HepG2 (cell line): ENCODE measurements at regions of chr7 and their contacts with region 1.

Region 1: GRCh38 chr7:117673839-117674238 is 194.0 kb downstream of the CFTR start:
- DNase-seq: peak; percentile 7
- ATAC-seq: peak; percentile 66; the same call in 1 of the 3 replicates
- H3K4me3 ChIP-seq: no peak overlapping the region
- H3K27ac ChIP-seq: no peak overlapping the region
- H3K4me1 ChIP-seq: no peaks in the 10 kb centered on the region
- H3K27me3 ChIP-seq: peaks cover 0 to 6% of the 10 kb centered on the region in 2 experiments; a peak in 1 of 5 replicates
- CTCF ChIP-seq: peak; percentile 21; the same call in 1 of the 2 replicates
- EP300 ChIP-seq: no peak
- POLR2A ChIP-seq: no peak
- RAD21 ChIP-seq: no peak

Region 2: GRCh38 chr7:117458977-117459583 is 214.8 kb before region 1 on chr7:
- CTCF ChIA-PET with region 1: no interaction called
- POLR2A ChIA-PET with region 1: no interaction called
- in situ Hi-C with region 1: no loop called
- intact Hi-C with region 1: loop called (anchors 1 kb)
- DNase-seq: peak; percentile 18
- ATAC-seq: no peak
- H3K4me3 ChIP-seq: no peak overlapping the region
- H3K27ac ChIP-seq: no peak overlapping the region
- H3K4me1 ChIP-seq: no peaks in the 10 kb centered on the region
- H3K27me3 ChIP-seq: no peaks in the 10 kb centered on the region
- CTCF ChIP-seq: peak; percentile 35
- EP300 ChIP-seq: no peak
- POLR2A ChIP-seq: no peak
- RAD21 ChIP-seq: no peak

Region 3: GRCh38 chr7:117470777-117471176 is 203.1 kb before region 1 on chr7:
- CTCF ChIA-PET with region 1: no interaction called
- POLR2A ChIA-PET with region 1: no interaction called
- in situ Hi-C with region 1: no loop called
- intact Hi-C with region 1: no loop called
- DNase-seq: no peak
- ATAC-seq: no peak
- H3K4me3 ChIP-seq: no peak overlapping the region
- H3K27ac ChIP-seq: no peak overlapping the region
- H3K4me1 ChIP-seq: no peaks in the 10 kb centered on the region
- H3K27me3 ChIP-seq: no peaks in the 10 kb centered on the region
- CTCF ChIP-seq: no peak
- EP300 ChIP-seq: no peak
- POLR2A ChIP-seq: no peak
- RAD21 ChIP-seq: no peak

Region 4: GRCh38 chr7:117848941-117849340 is 175.1 kb after region 1 on chr7:
- CTCF ChIA-PET with region 1: no interaction called
- POLR2A ChIA-PET with region 1: no interaction called
- in situ Hi-C with region 1: no loop called
- intact Hi-C with region 1: no loop called
- DNase-seq: no peak
- ATAC-seq: no peak
- H3K4me3 ChIP-seq: no peak overlapping the region
- H3K27ac ChIP-seq: no peak overlapping the region
- H3K4me1 ChIP-seq: no peaks in the 10 kb centered on the region
- H3K27me3 ChIP-seq: no peaks in the 10 kb centered on the region
- CTCF ChIP-seq: no peak
- EP300 ChIP-seq: no peak
- POLR2A ChIP-seq: no peak
- RAD21 ChIP-seq: no peak